ENCODE measurements at regions of chr3 and their contacts with region 1.

Region 1: DNA sequence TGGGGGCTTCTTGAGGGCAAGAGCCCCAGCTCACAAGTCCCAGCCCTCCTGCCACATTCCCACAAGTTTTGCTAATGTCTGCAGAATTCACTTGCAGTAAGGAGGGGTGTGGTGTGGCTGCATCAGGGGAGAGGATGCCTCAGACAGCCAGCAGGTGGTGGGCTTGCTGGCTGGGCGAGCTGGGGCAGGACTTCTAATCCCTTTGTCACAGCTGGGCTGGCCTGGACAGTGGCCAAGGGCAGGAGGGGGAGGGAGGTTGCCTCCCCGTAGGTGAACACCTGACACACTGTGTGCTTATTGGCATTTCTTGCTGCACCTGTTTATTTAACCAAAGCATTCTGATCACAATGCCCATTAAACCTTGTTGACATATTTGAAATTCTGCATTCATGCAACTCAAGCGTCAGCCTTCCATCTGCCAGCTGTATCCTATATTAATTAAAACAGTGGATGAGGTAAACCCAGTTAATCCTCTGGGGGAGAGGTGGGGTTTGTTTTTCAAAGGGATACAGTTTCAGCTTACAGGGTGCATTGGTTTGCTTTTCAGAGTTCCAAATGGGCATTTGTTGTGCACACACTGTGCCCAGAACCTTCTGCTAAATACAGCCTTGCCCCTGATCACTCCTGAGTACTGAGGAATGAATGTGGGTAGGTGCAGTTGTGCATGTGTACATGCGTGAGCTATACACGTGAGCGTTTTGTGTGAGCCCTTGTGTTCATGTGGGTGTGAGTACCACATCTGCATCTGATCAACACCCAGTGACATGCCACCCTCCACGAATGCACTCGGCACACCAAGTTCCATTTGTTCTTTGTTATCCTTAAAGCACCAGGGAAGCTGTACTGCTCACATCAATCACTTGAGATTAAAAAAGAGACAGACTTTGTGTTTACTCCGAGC is 268.7 kb downstream of the XXYLT1 start:
- DNase-seq: peak; percentile 39
- ATAC-seq: peak; percentile 85
- H3K4me3 ChIP-seq: no peak overlapping the region
- H3K27ac ChIP-seq: peak overlapping the region; percentile 81
- H3K4me1 ChIP-seq: peaks cover 14% of the 10 kb centered on the region
- H3K27me3 ChIP-seq: no peaks in the 10 kb centered on the region
- CTCF ChIP-seq: peak; percentile 79; the same call in 1 of the 2 replicates

Region 2: GRCh38 chr3:195106418-195106906 is 104.3 kb after region 1 on chr3:
- CTCF ChIA-PET with region 1: interaction called, 5 read pairs
- POLR2A ChIA-PET with region 1: no interaction called
- in situ Hi-C with region 1: no loop called
- intact Hi-C with region 1: loop called (anchors 5 kb)
- DNase-seq: no peak
- ATAC-seq: peak; percentile 77
- H3K4me3 ChIP-seq: peak overlapping the region in 1 of 2 experiments; percentile 39; a peak in 2 of 4 replicates
- H3K27ac ChIP-seq: peak overlapping the region; percentile 100
- H3K4me1 ChIP-seq: peaks cover 53% of the 10 kb centered on the region
- H3K27me3 ChIP-seq: no peaks in the 10 kb centered on the region
- CTCF ChIP-seq: peak; percentile 100

Measured in Panc1 (cell line).